ENCODE measurements at regions of chr19 and their contacts with region 1.

Region 1: DNA sequence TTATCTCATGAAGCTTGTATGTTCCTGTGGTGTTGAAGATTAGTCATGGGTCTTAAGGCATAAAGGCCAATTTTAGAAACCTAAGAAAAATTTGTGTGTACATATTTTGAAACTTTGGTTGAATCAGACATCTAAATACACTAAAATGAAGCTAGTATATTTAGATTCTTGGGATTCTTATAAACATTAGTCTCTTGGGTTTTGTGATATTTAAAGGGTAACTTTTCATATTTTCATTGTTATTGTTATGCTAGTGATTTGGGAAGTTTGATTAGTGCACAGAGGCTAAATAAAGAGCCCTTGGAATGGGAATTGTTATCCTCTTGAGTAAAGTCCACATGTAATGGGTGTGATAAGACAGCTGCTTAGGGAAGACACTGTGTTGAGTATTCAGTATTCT is 24.5 kb downstream of the UBA2 start:
- DNase-seq: no peak
- H3K4me3 ChIP-seq: no peak overlapping the region
- H3K27ac ChIP-seq: no peak overlapping the region
- H3K4me1 ChIP-seq: no peaks in the 10 kb centered on the region
- H3K27me3 ChIP-seq: no peaks in the 10 kb centered on the region
- CTCF ChIP-seq: no peak
- EP300 ChIP-seq: no peak
- POLR2A ChIP-seq: no peak
- RAD21 ChIP-seq: no peak

Region 2: GRCh38 chr19:34436716-34437115 is 16.0 kb before region 1 on chr19:
- CTCF ChIA-PET with region 1: interaction called, 4 read pairs
- POLR2A ChIA-PET with region 1: interaction called, 11 read pairs
- DNase-seq: no peak
- H3K4me3 ChIP-seq: no peak overlapping the region
- H3K27ac ChIP-seq: no peak overlapping the region
- H3K4me1 ChIP-seq: no peaks in the 10 kb centered on the region
- H3K27me3 ChIP-seq: no peaks in the 10 kb centered on the region
- CTCF ChIP-seq: no peak
- EP300 ChIP-seq: no peak
- POLR2A ChIP-seq: no peak
- RAD21 ChIP-seq: no peak